PC-3 (cell line): ENCODE measurements at regions of chr6 and their contacts with region 1.

Region 1: DNA sequence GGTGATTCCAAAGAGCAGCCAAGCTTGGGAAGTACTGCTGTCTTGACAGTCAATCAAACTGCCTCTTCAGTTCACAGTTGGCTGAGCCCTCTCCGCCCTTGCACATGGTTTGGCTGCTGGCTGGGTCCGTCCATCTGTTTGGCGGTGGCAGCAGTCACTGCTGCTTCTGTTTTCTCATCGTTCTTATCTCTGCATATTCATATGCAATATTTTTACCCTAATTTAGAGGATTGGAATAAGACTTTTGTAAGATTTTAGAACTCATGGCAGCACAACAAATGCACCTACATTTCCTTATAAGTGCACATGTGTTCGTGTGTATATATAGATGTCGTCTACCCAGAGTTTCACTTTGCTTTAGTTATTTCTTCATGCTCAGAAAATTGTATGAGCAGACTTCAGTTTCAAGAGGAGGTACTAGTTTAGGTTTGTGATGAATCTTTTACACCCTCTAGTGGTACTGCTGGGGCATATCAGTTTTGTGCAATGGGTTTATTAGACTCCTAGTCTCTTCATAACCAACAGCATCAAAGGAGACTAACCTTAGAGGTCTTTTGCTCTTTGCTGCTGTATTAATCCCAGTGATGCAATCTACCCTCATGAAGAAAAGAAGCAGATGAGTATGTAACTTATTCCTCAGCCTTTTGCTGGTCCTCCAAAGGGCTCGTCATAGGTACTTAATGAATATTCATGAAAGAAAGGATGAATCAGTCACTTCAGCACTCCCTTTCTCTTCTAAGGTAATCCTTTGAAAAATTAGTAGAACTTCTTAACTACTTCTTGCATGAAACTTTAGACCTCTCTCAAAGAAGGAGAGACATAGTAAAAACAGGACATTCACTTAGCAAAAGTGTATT is 44.3 kb downstream of the KHDC1L start:
- DNase-seq: peak; percentile 76
- ATAC-seq: peak; percentile 91
- H3K4me3 ChIP-seq: peak overlapping the region; percentile 66
- H3K27ac ChIP-seq: no peak overlapping the region
- H3K4me1 ChIP-seq: peaks cover 6% of the 10 kb centered on the region; the same call in 1 of the 2 replicates
- H3K27me3 ChIP-seq: no peaks in the 10 kb centered on the region
- CTCF ChIP-seq: peak; percentile 86

Region 2: GRCh38 chr6:72246926-72247325 is 934.1 kb before region 1 on chr6:
- CTCF ChIA-PET with region 1: no interaction called
- POLR2A ChIA-PET with region 1: no interaction called
- intact Hi-C with region 1: loop called (anchors 5 kb)
- DNase-seq: peak; percentile 22
- ATAC-seq: peak; percentile 71
- H3K4me3 ChIP-seq: no peak overlapping the region
- H3K27ac ChIP-seq: no peak overlapping the region
- H3K4me1 ChIP-seq: no peaks in the 10 kb centered on the region
- H3K27me3 ChIP-seq: no peaks in the 10 kb centered on the region
- CTCF ChIP-seq: peak; percentile 44

Region 3: GRCh38 chr6:72411872-72412708 is 768.9 kb before region 1 on chr6:
- CTCF ChIA-PET with region 1: no interaction called
- POLR2A ChIA-PET with region 1: no interaction called
- intact Hi-C with region 1: loop called (anchors 1 kb)
- DNase-seq: peak; percentile 80
- ATAC-seq: peak; percentile 85
- H3K4me3 ChIP-seq: no peak overlapping the region
- H3K27ac ChIP-seq: no peak overlapping the region
- H3K4me1 ChIP-seq: peaks cover 7% of the 10 kb centered on the region
- H3K27me3 ChIP-seq: no peaks in the 10 kb centered on the region
- CTCF ChIP-seq: peak; percentile 99

Region 4: GRCh38 chr6:72580281-72580940 is 600.6 kb before region 1 on chr6:
- CTCF ChIA-PET with region 1: no interaction called
- POLR2A ChIA-PET with region 1: no interaction called
- intact Hi-C with region 1: loop called (anchors 1 kb)
- DNase-seq: peak; percentile 68
- ATAC-seq: peak; percentile 71
- H3K4me3 ChIP-seq: no peak overlapping the region
- H3K27ac ChIP-seq: no peak overlapping the region
- H3K4me1 ChIP-seq: peaks cover 4% of the 10 kb centered on the region; the same call in 1 of the 2 replicates
- H3K27me3 ChIP-seq: no peaks in the 10 kb centered on the region
- CTCF ChIP-seq: peak; percentile 78

Region 5: DNA sequence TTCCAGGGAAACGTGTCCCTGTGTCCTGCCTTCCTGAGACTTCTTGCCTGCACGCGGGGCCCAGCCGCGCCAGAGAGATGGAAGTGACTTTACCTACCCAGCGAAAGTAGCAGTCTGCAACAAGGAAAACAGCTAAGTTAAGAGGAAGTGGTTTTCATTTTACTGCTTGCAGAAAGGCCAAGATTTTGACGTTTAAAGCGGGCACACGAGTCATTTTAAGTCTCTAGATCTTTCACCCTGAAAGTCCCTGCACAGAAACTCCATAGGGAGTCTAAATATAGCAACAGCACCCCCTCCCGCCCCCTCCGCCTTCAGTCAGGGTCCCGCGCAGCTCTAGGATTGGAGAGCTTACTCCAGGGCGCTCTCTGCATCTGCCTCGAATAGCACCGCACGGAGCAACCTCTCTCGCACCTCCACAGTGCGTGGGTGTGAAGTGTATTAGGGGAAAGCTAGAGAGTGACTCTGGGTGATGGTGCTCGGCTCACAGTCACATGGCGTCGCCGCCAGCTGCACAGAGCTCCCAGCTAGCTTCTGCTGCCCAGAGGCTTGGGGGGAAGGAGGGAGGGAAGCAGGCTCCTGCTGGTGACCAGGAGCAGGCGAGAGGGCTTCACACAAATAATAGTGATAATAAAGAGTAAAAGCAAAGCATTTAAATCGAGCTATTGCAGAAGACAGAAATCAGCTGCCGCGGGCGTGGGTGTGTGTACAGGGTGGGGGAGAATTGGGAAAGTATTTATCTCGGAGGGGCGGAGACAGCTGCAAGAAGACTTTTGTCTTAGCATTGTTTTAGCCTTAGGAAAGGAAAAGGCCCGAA is 560.9 kb before region 1 on chr6:
- CTCF ChIA-PET with region 1: no interaction called
- POLR2A ChIA-PET with region 1: no interaction called
- intact Hi-C with region 1: loop called (anchors 1 kb)
- DNase-seq: no peak
- ATAC-seq: no peak
- H3K4me3 ChIP-seq: no peak overlapping the region
- H3K27ac ChIP-seq: no peak overlapping the region
- H3K4me1 ChIP-seq: no peaks in the 10 kb centered on the region; the same call in 1 of the 2 replicates
- H3K27me3 ChIP-seq: no peaks in the 10 kb centered on the region
- CTCF ChIP-seq: no peak

Region 6: DNA sequence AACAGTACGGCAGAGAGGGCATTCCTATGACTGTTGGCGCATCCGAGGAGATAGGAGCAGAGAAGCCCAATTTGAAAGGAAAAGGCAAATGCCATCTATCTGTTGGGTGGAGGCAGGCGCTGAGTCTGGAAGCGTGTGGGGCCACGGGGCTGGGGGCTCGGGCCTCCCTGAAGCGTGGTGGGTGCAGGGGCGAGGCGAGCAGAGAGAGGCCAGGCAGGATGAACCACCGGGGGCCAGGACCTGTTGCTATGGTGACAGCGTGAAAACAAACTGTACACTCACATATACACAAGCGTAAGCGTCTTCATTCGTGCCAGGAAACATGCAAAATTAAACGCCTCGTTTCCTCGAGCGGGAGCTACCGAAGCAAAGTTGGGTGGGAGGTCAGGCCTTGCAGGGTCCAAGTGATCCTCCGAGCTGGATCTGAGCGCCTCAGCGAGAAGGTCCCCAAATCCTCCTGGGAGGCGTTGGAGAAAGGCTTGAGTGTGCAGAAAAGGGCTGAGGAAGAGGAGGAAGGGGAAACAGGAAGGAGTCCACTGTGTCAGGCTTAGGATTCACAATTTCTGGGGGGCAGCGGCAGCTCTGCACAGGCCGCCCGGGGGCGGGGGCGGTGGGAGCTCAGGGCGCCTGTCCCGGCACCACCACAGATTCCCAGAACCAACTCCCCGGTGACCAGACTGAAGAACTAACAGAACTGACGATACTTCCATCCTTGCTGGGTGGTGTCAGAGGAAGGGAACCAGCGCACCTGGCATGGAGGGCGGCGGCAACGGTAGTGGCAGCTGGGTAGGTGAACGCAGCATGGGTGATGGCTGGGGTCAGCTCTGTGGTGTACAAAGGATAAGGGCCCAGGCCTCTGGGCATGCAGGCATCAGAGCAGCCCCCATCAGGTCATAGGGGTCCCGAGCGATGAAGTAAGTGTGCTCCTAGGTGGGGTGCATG is 23.9 kb before region 1 on chr6:
- CTCF ChIA-PET with region 1: no interaction called
- POLR2A ChIA-PET with region 1: no interaction called
- intact Hi-C with region 1: no loop called
- DNase-seq: no peak
- ATAC-seq: no peak
- H3K4me3 ChIP-seq: no peak overlapping the region
- H3K27ac ChIP-seq: no peak overlapping the region
- H3K4me1 ChIP-seq: no peaks in the 10 kb centered on the region
- H3K27me3 ChIP-seq: no peaks in the 10 kb centered on the region
- CTCF ChIP-seq: no peak

Region 7: GRCh38 chr6:73231986-73232391 is 51.0 kb after region 1 on chr6:
- CTCF ChIA-PET with region 1: no interaction called
- POLR2A ChIA-PET with region 1: no interaction called
- intact Hi-C with region 1: loop called (anchors 1 kb)
- DNase-seq: peak; percentile 55
- ATAC-seq: peak; percentile 26
- H3K4me3 ChIP-seq: no peak overlapping the region
- H3K27ac ChIP-seq: peak overlapping the region; percentile 100
- H3K4me1 ChIP-seq: peaks cover 51% of the 10 kb centered on the region
- H3K27me3 ChIP-seq: no peaks in the 10 kb centered on the region
- CTCF ChIP-seq: no peak

Region 8: GRCh38 chr6:73329201-73329600 is 148.2 kb after region 1 on chr6:
- CTCF ChIA-PET with region 1: no interaction called
- POLR2A ChIA-PET with region 1: no interaction called
- intact Hi-C with region 1: loop called (anchors 5 kb)
- DNase-seq: no peak
- ATAC-seq: no peak
- H3K4me3 ChIP-seq: no peak overlapping the region
- H3K27ac ChIP-seq: no peak overlapping the region
- H3K4me1 ChIP-seq: peaks cover 3% of the 10 kb centered on the region; the same call in 1 of the 2 replicates
- H3K27me3 ChIP-seq: no peaks in the 10 kb centered on the region
- CTCF ChIP-seq: no peak

Region 9: GRCh38 chr6:73580247-73581149 is 399.5 kb after region 1 on chr6:
- CTCF ChIA-PET with region 1: no interaction called
- POLR2A ChIA-PET with region 1: no interaction called
- intact Hi-C with region 1: no loop called
- DNase-seq: peak; percentile 95
- ATAC-seq: peak; percentile 85
- H3K4me3 ChIP-seq: peak overlapping the region; percentile 65
- H3K27ac ChIP-seq: peak overlapping the region; percentile 99
- H3K4me1 ChIP-seq: peaks cover 35% of the 10 kb centered on the region
- H3K27me3 ChIP-seq: no peaks in the 10 kb centered on the region
- CTCF ChIP-seq: peak; percentile 52